Astrocyte of the cerebellum (primary cell): ENCODE measurements at regions of chr17 and their contacts with region 1.

Region 1: GRCh38 chr17:29012535-29012934 is 6.7 kb upstream of the SEZ6 start:
- DNase-seq: no peak
- H3K4me3 ChIP-seq: no peak overlapping the region
- CTCF ChIP-seq: no peak

Region 2: GRCh38 chr17:28728364-28729088 is 284.0 kb before region 1 on chr17 and contains the start of gene NEK8:
- in situ Hi-C with region 1: no loop called
- DNase-seq: peak; percentile 79
- H3K4me3 ChIP-seq: peak within 1 kb of the TSS; percentile 73
- CTCF ChIP-seq: no peak

Region 3: GRCh38 chr17:29078183-29079045 is 65.9 kb after region 1 on chr17:
- in situ Hi-C with region 1: loop called (anchors 5 kb)
- DNase-seq: no peak
- H3K4me3 ChIP-seq: no peak overlapping the region
- CTCF ChIP-seq: no peak